ENCODE measurements at regions of chr4 and their contacts with region 1.

Region 1: GRCh38 chr4:157389741-157390140 is 169.2 kb downstream of the GRIA2 start:
- DNase-seq: peak; percentile 35
- H3K4me3 ChIP-seq: no peak overlapping the region
- H3K27ac ChIP-seq: no peak overlapping the region
- H3K4me1 ChIP-seq: no peaks in the 10 kb centered on the region
- H3K27me3 ChIP-seq: no peaks in the 10 kb centered on the region
- CTCF ChIP-seq: no peak
- POLR2A ChIP-seq: no peak

Region 2: GRCh38 chr4:157405070-157405469 is 15.3 kb after region 1 on chr4:
- CTCF ChIA-PET with region 1: no interaction called
- POLR2A ChIA-PET with region 1: no interaction called
- dilution Hi-C with region 1: no loop called
- intact Hi-C with region 1: no loop called
- DNase-seq: no peak
- H3K4me3 ChIP-seq: no peak overlapping the region
- H3K27ac ChIP-seq: no peak overlapping the region
- H3K4me1 ChIP-seq: no peaks in the 10 kb centered on the region
- H3K27me3 ChIP-seq: no peaks in the 10 kb centered on the region
- CTCF ChIP-seq: no peak
- POLR2A ChIP-seq: no peak

Region 3: DNA sequence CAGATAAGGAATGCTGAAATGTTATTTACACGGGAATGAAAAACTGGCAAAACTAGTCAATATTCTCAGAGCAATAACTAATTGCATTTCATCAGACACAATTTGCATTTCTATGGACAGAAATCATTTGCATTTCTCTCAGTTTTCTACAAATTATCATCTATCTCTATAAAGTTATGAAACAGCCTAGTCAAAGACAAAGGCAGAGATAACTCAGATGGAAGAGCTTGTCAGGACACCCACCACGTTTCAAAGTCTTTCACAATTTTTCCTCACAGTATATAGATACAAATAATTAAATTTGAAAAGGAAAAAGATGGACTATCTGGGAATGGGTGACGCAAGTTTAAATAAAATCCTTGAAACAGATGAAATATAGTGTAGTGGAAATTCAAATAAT is 552.3 kb after region 1 on chr4:
- CTCF ChIA-PET with region 1: no interaction called
- POLR2A ChIA-PET with region 1: no interaction called
- dilution Hi-C with region 1: no loop called
- intact Hi-C with region 1: loop called (anchors 10 kb)
- DNase-seq: no peak
- H3K4me3 ChIP-seq: no peak overlapping the region
- H3K27ac ChIP-seq: no peak overlapping the region
- H3K4me1 ChIP-seq: no peaks in the 10 kb centered on the region
- H3K27me3 ChIP-seq: no peaks in the 10 kb centered on the region
- CTCF ChIP-seq: no peak
- POLR2A ChIP-seq: no peak

Measured in endothelial cell of umbilical vein (primary cell).